Posterior cingulate gyrus (tissue), 11 donors: ENCODE measurements at regions of chr15 and their contacts with region 1.

Region 1: GRCh38 chr15:68252925-68253534 is 23.5 kb upstream of the CLN6 start:
- DNase-seq: peak in 1 of 10 donors; percentile 35

Region 2: DNA sequence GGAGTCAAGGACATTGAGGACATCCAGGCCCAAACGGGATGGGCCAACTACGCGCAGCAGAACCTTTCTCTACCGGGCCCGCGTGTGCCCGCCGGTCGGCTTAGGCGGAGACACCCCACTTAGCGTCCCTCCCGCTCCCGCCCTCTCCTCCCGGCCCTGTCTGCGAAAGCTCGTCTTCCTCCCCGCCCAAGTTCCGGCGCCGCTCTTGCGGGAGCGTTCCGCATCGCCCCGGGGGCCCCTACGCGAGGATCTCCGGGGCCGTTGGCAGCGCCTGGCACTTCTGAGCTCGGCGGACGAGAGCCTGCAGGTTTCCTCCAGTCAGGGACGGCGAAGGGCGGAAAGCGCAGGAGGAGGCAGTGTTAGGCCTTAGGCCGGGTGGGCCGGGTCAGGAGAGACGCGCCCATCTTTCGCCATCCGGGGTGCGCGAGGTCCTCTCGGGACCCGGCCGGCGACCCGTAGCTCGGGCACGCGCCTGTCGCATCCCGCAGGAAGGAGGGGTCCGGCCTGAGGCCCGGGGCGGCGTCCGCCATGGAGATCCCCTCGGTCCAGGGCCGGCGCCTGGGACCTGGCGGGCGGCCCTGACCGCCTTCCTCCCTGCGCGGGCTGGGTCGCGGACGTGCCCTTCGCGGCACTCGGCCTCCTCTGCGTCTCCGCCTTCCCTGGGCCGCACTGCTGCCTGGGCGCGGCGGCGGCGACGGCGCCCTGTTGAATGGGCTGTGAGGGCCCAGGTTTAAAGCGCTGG is 24.7 kb after region 1 on chr15 and contains the start of gene FEM1B:
- intact Hi-C with region 1: loop called (anchors 1 kb)
- DNase-seq: peak; percentile 84 to 98 (median 90)

Region 3: GRCh38 chr15:68383161-68384074 is 130.4 kb after region 1 on chr15:
- intact Hi-C with region 1: loop called (anchors 5 kb)
- DNase-seq: peak in 1 of 10 donors; percentile 23